Common myeloid progenitor, CD34-positive (primary cell): ENCODE measurements at regions of chr10 and their contacts with region 1.

Region 1: GRCh38 chr10:52779541-52780390 is 7.2 kb upstream of the MBL2 start:
- DNase-seq: peak; percentile 65 to 85 (median 77)
- H3K4me3 ChIP-seq: no peak overlapping the region
- H3K27ac ChIP-seq: no peak overlapping the region
- H3K4me1 ChIP-seq: peaks cover 0 to 7% (median 3%) of the 10 kb centered on the region in 4 experiments
- H3K27me3 ChIP-seq: peaks cover 0 to 2% (median 0%) of the 10 kb centered on the region in 5 experiments

Region 2: GRCh38 chr10:52632591-52632990 is 147.2 kb before region 1 on chr10:
- CTCF ChIA-PET with region 1: interaction called, 14 read pairs
- POLR2A ChIA-PET with region 1: no interaction called
- DNase-seq: peak in 1 of 3 donors; percentile 4
- H3K4me3 ChIP-seq: no peak overlapping the region
- H3K27ac ChIP-seq: no peak overlapping the region
- H3K4me1 ChIP-seq: peaks cover 0 to 15% (median 6%) of the 10 kb centered on the region in 4 experiments
- H3K27me3 ChIP-seq: no peaks in the 10 kb centered on the region

Region 3: DNA sequence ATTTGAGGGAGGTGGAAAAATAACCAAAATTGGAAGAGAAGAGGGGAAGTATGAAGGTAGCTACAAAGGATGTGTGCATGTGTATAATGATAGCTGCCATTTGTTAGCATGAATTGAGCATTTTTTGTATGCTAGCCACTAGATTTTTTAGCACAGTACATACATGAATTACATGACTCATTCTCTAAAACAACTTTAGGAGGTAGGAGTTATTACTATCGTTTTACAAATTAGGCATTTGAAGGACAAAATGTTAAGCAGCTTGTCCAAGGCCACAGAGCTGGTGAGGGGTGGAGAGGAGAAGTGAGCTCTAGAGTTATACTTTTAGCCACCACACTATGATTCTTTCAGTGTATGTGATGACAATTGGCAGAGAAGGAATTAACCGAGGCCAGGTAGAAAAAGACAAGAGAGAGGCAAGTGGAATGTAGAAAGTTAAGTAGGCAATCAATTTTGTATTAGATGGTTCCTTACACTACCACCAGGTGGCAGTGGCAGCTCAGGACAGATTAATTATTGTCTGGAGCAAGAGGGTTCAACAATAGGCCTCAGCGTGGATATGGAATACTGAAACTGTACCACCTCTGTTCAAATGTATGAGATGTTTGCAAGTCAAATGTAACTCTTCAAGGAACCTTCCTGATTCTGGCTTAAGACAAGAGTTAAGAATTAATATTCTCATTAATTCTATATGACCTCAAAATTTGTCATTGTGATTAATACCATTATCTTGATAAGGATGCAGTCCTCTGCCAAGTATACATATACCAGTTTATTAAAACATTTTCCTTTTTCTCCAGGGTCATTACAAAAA is 135.2 kb before region 1 on chr10:
- CTCF ChIA-PET with region 1: interaction called, 107 read pairs
- POLR2A ChIA-PET with region 1: no interaction called
- DNase-seq: peak; percentile 45 to 70 (median 63)
- H3K4me3 ChIP-seq: no peak overlapping the region
- H3K27ac ChIP-seq: no peak overlapping the region
- H3K4me1 ChIP-seq: peaks cover 0 to 7% (median 3%) of the 10 kb centered on the region in 4 experiments
- H3K27me3 ChIP-seq: peaks cover 0 to 5% (median 0%) of the 10 kb centered on the region in 5 experiments

Region 4: GRCh38 chr10:52720018-52720417 is 59.7 kb before region 1 on chr10:
- CTCF ChIA-PET with region 1: interaction called, 11 read pairs
- POLR2A ChIA-PET with region 1: no interaction called
- DNase-seq: no peak
- H3K4me3 ChIP-seq: no peak overlapping the region
- H3K27ac ChIP-seq: no peak overlapping the region
- H3K4me1 ChIP-seq: no peaks in the 10 kb centered on the region
- H3K27me3 ChIP-seq: no peaks in the 10 kb centered on the region

Region 5: DNA sequence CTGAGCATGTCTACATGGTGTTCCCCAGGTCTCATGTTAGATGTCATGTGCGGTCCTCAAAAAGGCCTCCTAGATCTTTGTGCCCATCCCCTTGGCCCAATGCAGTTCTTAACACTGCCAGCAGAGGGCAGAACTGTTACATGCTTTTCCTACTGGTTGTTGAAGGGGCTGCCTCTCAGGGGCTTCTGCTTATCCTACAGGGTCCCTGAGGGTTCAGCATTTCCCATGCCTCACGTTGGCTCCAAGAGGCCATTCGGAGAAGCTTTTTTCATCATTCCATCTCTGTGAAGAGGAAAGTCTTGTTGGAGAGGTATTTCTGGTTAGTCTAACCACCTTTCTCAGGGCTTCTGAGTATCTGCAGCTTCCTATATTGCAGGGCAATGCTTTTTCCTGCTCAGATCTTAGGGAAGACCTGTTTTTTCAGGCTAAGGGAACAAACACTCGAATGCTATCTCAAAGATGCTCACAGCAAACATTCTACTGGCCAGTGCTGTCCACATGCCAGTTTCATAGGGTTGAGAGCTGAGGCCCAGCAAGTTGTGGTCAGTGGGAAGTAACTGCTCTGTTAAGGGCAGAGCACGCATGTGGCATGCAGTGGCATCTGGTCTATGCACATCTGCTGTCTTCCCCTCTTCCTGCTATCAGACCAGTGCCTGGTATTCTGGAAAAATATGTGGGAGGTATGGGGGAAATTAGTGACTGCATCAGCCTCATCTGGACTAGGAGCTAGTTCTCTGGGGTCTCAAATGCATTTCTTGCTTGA is 38.7 kb before region 1 on chr10:
- CTCF ChIA-PET with region 1: interaction called, 433 read pairs
- POLR2A ChIA-PET with region 1: no interaction called
- DNase-seq: peak; percentile 68 to 84 (median 78)
- H3K4me3 ChIP-seq: no peak overlapping the region
- H3K27ac ChIP-seq: no peak overlapping the region
- H3K4me1 ChIP-seq: peaks cover 0 to 19% (median 7%) of the 10 kb centered on the region in 4 experiments
- H3K27me3 ChIP-seq: no peaks in the 10 kb centered on the region

Region 6: GRCh38 chr10:52755297-52756062 is 24.3 kb before region 1 on chr10:
- CTCF ChIA-PET with region 1: interaction called, 433 read pairs
- POLR2A ChIA-PET with region 1: interaction called, 3 read pairs
- DNase-seq: peak; percentile 90 to 99 (median 98)
- H3K4me3 ChIP-seq: peak overlapping the region in 6 of 7 experiments; percentile 48 to 79 (median 68)
- H3K27ac ChIP-seq: peak overlapping the region; percentile 69 to 70
- H3K4me1 ChIP-seq: peaks cover 30 to 79% (median 52%) of the 10 kb centered on the region in 4 experiments
- H3K27me3 ChIP-seq: no peaks in the 10 kb centered on the region